Natural killer cell (primary cell): ENCODE measurements at regions of chr9 and their contacts with region 1.

Region 1: DNA sequence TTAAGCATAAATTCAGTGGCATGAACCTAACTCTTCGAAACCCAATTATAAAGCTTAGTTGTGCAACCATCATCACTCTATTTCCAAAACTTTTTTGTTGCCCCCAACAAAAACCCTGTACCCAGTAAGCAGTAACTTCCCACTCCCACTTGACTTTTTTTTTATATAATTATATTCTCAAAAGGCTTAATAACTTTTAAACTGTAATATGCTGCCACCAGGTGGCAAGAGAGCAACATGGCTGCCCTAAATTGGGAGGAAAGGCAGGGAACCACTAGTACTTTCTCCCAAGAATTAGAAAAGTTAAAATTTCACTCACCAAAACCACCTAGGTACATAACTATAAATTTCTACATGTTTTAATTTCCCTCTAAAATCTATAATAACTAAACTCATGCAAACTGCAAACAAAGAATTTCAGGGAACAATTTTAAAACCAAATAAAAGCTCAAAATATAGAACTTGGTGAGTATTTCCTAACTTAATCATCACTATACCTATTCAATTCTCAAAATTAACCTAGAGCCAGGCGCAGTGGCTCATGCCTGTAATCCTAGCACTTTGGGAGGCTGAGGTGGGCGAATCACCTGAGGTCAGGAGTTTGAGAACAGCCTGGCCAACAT is 50.2 kb upstream of the RNF38 start:
- DNase-seq: peak in 1 of 2 donors; percentile 68
- ATAC-seq: peak in 1 of 3 donors; percentile 26
- H3K4me3 ChIP-seq: no peak overlapping the region
- H3K4me3 Mint-ChIP-seq: no peak overlapping the region
- H3K27ac ChIP-seq: no peak overlapping the region
- H3K27ac Mint-ChIP-seq: no peak overlapping the region
- H3K4me1 ChIP-seq: peaks cover 13% of the 10 kb centered on the region
- H3K4me1 Mint-ChIP-seq: peaks cover 20 to 24% of the 10 kb centered on the region in 2 donors
- H3K27me3 ChIP-seq: no peaks in the 10 kb centered on the region
- H3K27me3 Mint-ChIP-seq: no peaks in the 10 kb centered on the region
- CTCF ChIP-seq: peak; percentile 71

Region 2: DNA sequence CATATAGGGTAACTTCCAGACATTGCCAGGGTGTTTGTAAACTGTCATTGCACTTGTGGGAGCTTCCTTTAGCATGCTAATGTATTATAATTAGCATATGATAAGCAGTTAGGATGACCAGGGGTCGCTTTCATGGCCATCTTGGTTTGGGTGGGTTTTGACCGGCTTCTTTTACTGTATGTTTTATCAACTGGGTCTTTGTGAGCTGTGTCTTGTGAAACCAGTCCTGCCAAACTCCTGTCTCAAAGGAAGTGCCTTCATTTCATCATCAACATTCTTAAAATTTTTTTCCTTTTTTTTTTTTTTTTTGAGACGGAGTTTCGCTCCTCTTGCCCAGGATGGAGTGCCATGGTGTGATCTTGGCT is 110.6 kb after region 1 on chr9:
- intact Hi-C with region 1: loop called (anchors 1 kb)
- DNase-seq: no peak
- ATAC-seq: no peak
- H3K4me3 ChIP-seq: no peak overlapping the region
- H3K4me3 Mint-ChIP-seq: no peak overlapping the region
- H3K27ac ChIP-seq: no peak overlapping the region
- H3K27ac Mint-ChIP-seq: no peak overlapping the region
- H3K4me1 ChIP-seq: no peaks in the 10 kb centered on the region
- H3K4me1 Mint-ChIP-seq: no peaks in the 10 kb centered on the region
- H3K27me3 ChIP-seq: no peaks in the 10 kb centered on the region
- H3K27me3 Mint-ChIP-seq: no peaks in the 10 kb centered on the region
- CTCF ChIP-seq: no peak

Region 3: DNA sequence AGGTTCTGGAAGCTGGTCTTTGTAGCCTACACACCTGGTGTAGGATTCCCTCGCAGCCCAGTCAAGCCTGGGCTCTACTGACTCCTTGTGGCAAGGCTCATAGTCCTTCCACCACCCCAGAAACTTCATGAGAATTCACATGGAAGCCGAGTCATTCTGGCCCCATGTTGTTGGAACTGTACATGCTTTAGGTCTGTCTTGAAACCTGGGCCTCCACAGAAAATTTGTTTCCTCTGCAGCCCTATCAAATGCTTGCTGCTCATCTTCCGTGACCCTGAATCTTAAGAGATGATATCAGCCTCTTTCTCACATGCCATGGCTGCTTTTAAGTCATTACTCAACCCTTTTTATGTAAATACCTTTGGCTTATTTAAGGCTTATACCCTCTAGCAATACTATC is 858.9 kb after region 1 on chr9:
- intact Hi-C with region 1: no loop called
- DNase-seq: peak in 1 of 2 donors; percentile 38
- ATAC-seq: no peak
- H3K4me3 ChIP-seq: no peak overlapping the region
- H3K4me3 Mint-ChIP-seq: no peak overlapping the region
- H3K27ac ChIP-seq: no peak overlapping the region
- H3K27ac Mint-ChIP-seq: no peak overlapping the region
- H3K4me1 ChIP-seq: peaks cover 7% of the 10 kb centered on the region
- H3K4me1 Mint-ChIP-seq: peaks cover 16% of the 10 kb centered on the region in 2 donors
- H3K27me3 ChIP-seq: no peaks in the 10 kb centered on the region
- H3K27me3 Mint-ChIP-seq: no peaks in the 10 kb centered on the region
- CTCF ChIP-seq: no peak